Naive thymus-derived CD4-positive, alpha-beta T cell (primary cell): ENCODE measurements at regions of chr3 and their contacts with region 1.

Region 1: DNA sequence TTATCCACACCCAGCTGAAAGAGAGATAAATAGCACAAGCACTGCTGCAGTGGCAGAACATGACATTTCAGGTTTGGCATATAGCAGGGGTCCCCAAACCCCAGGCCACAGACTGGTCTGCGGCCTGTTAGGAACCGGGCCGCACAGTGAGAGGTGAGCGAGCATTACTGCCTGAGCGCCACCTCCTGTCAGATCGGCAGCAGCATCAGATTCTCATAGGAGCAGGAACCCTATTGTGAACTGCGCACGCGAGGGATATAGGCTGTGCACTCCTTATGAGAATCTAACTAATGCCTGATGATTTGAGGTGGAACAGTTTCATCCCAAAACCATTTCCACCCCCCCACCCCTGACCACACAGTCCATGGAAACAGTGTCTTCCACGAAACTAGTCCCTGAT is 54.6 kb downstream of the CCR4 start:
- DNase-seq: no peak
- ATAC-seq: no peak
- H3K4me3 ChIP-seq: no peak overlapping the region
- H3K4me3 Mint-ChIP-seq: no peak overlapping the region
- H3K27ac ChIP-seq: no peak overlapping the region
- H3K27ac Mint-ChIP-seq: peak overlapping the region in 1 of 9 donors; percentile 3
- H3K4me1 ChIP-seq: peaks cover 14 to 17% of the 10 kb centered on the region in 2 donors
- H3K4me1 Mint-ChIP-seq: peaks cover 16 to 34% (median 24%) of the 10 kb centered on the region in 7 donors
- H3K27me3 ChIP-seq: no peaks in the 10 kb centered on the region
- H3K27me3 Mint-ChIP-seq: no peaks in the 10 kb centered on the region

Region 2: DNA sequence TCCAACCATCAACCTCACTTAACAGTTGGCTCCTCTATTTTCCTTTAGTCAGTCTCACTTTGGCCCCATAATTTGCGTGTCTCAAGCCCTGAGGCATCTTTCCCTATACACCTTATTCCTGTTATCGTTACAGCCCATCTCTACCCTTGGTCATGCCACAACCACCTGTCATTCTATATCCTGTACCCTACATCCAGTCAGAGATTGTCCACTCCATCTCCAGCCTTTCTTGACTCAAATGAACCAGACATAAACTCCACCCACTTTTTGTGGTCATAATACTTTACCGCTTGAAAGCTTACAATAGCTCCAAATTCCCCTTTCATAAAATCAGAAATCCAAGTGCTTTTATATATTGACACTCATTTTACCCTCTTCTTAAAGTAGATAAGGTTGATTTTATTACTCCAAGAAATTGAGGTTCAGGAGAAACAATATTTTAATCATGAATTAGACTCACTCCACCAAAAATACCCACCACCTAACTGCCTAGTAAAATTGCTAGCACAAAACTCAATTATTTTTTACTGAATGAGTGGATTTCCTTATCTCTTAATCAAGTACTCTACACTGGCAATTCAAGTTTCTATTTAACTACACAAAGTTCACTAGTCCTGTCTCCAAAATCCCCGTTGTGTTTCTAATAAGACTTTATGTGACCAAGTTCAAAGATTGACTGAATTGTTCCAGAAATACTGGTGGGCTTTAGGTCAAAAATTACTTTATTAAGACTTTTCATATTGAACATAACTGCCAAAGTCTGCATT is 45.5 kb before region 1 on chr3:
- CTCF ChIA-PET with region 1: no interaction called
- POLR2A ChIA-PET with region 1: no interaction called
- intact Hi-C with region 1: loop called in 1 of 2 experiments (anchors 5 kb)
- DNase-seq: no peak
- ATAC-seq: no peak
- H3K4me3 ChIP-seq: no peak overlapping the region
- H3K4me3 Mint-ChIP-seq: peak overlapping the region in 4 of 10 donors; percentile 7 to 62 (median 36)
- H3K27ac ChIP-seq: no peak overlapping the region
- H3K27ac Mint-ChIP-seq: peak overlapping the region in 7 of 9 donors; percentile 31 to 92 (median 81)
- H3K4me1 ChIP-seq: peaks cover 11 to 21% of the 10 kb centered on the region in 2 donors
- H3K4me1 Mint-ChIP-seq: peaks cover 11 to 44% (median 22%) of the 10 kb centered on the region in 7 donors
- H3K27me3 ChIP-seq: no peaks in the 10 kb centered on the region
- H3K27me3 Mint-ChIP-seq: peaks cover 0 to 3% (median 0%) of the 10 kb centered on the region in 5 donors

Region 3: GRCh38 chr3:32973982-32974381 is 32.1 kb before region 1 on chr3:
- CTCF ChIA-PET with region 1: no interaction called
- POLR2A ChIA-PET with region 1: no interaction called
- intact Hi-C with region 1: loop called in 1 of 2 experiments (anchors 2 kb)
- DNase-seq: peak in 3 of 9 donors; percentile 11 to 47 (median 32)
- ATAC-seq: peak; percentile 64
- H3K4me3 ChIP-seq: no peak overlapping the region
- H3K4me3 Mint-ChIP-seq: peak overlapping the region in 1 of 10 donors; percentile 66
- H3K27ac ChIP-seq: no peak overlapping the region
- H3K27ac Mint-ChIP-seq: peak overlapping the region in 1 of 9 donors; percentile 77
- H3K4me1 ChIP-seq: peaks cover 6 to 39% of the 10 kb centered on the region in 2 donors
- H3K4me1 Mint-ChIP-seq: peaks cover 0 to 52% (median 7%) of the 10 kb centered on the region in 7 donors
- H3K27me3 ChIP-seq: no peaks in the 10 kb centered on the region
- H3K27me3 Mint-ChIP-seq: no peaks in the 10 kb centered on the region

Region 4: DNA sequence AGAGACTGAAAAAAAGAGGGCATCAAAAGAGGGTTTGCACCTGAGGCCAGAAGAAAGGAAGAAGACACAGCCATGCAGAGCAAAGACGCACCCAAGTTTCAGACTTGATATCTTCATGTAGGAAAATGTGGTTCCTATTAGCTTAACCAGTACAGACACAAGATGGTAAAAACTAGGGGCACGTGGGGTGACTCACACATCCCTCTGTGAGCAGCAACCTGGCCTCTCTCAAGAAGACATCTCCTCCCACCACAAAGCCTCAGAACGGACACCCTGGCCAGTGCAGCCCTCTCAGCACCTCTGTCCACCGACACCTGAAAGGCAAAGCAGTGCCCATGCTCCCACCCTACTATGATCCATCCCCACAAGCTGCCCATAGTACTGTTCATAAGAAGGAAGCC is 57.6 kb after region 1 on chr3:
- CTCF ChIA-PET with region 1: no interaction called
- POLR2A ChIA-PET with region 1: interaction called, 4 read pairs
- intact Hi-C with region 1: loop called in 1 of 2 experiments (anchors 5 kb)
- DNase-seq: peak in 1 of 9 donors; percentile 61
- ATAC-seq: peak; percentile 47
- H3K4me3 ChIP-seq: no peak overlapping the region
- H3K4me3 Mint-ChIP-seq: peak overlapping the region in 9 of 10 donors; percentile 8 to 68 (median 43)
- H3K27ac ChIP-seq: no peak overlapping the region
- H3K27ac Mint-ChIP-seq: peak overlapping the region; percentile 1 to 85 (median 39)
- H3K4me1 ChIP-seq: peaks cover 44 to 55% of the 10 kb centered on the region in 2 donors
- H3K4me1 Mint-ChIP-seq: peaks cover 35 to 55% (median 48%) of the 10 kb centered on the region in 7 donors
- H3K27me3 ChIP-seq: no peaks in the 10 kb centered on the region
- H3K27me3 Mint-ChIP-seq: no peaks in the 10 kb centered on the region